ENCODE measurements at regions of chr6 and their contacts with region 1.

Region 1: GRCh38 chr6:30828027-30828960 is 56.0 kb upstream of the DDR1 start:
- DNase-seq: peak; percentile 86 to 94
- ATAC-seq: peak; percentile 89 to 93
- H3K4me3 ChIP-seq: peak overlapping the region in 2 of 4 donors; percentile 31 to 42
- H3K27ac ChIP-seq: peak overlapping the region; percentile 85 to 94 (median 92)
- H3K4me1 ChIP-seq: peaks cover 28 to 31% of the 10 kb centered on the region in 2 donors
- H3K27me3 ChIP-seq: no peaks in the 10 kb centered on the region
- CTCF ChIP-seq: peak; percentile 88 to 97 (median 93)
- POLR2A ChIP-seq: peak in 1 of 2 donors; percentile 52

Region 2: GRCh38 chr6:30717042-30717844 is 111.1 kb before region 1 on chr6 and contains the start of gene MDC1:
- in situ Hi-C with region 1: no loop called
- intact Hi-C with region 1: no loop called
- DNase-seq: peak; percentile 100
- ATAC-seq: peak; percentile 79 to 80
- H3K4me3 ChIP-seq: peak within 1 kb of the TSS; percentile 69 to 91 (median 86)
- H3K27ac ChIP-seq: peak within 1 kb of the TSS; percentile 94 to 99 (median 97)
- H3K4me1 ChIP-seq: peaks cover 27 to 30% of the 10 kb centered on the region in 2 donors
- H3K27me3 ChIP-seq: no peaks in the 10 kb centered on the region
- CTCF ChIP-seq: peak; percentile 41 to 57 (median 46)
- POLR2A ChIP-seq: peak; percentile 62 to 91
- total RNA-seq, gene MDC1: 3.6 to 8.9 (median 6.2) TPM

Region 3: GRCh38 chr6:30742316-30743098 is 85.8 kb before region 1 on chr6 and contains the start of gene FLOT1:
- in situ Hi-C with region 1: loop called in 2 of 4 experiments (anchors 5 to 10 kb)
- intact Hi-C with region 1: loop called (anchors 2 kb)
- DNase-seq: peak; percentile 93 to 98
- ATAC-seq: peak; percentile 79 to 84
- H3K4me3 ChIP-seq: peak within 1 kb of the TSS; percentile 63 to 83 (median 74)
- H3K27ac ChIP-seq: peak within 1 kb of the TSS; percentile 86 to 94 (median 86)
- H3K4me1 ChIP-seq: peaks cover 22 to 24% of the 10 kb centered on the region in 2 donors
- H3K27me3 ChIP-seq: no peaks in the 10 kb centered on the region
- CTCF ChIP-seq: peak in 1 of 5 experiments; percentile 8
- POLR2A ChIP-seq: peak; percentile 70 to 71
- total RNA-seq, gene FLOT1: 96.9 to 127 (median 117) TPM

Region 4: GRCh38 chr6:30877419-30878371 is 49.4 kb after region 1 on chr6:
- in situ Hi-C with region 1: loop called (anchors 5 to 10 kb)
- intact Hi-C with region 1: loop called (anchors 1 kb)
- DNase-seq: peak; percentile 74 to 89
- ATAC-seq: peak; percentile 86 to 88
- H3K4me3 ChIP-seq: peak overlapping the region; percentile 40 to 54 (median 41)
- H3K27ac ChIP-seq: peak overlapping the region; percentile 76 to 80 (median 79)
- H3K4me1 ChIP-seq: peaks cover 20 to 33% of the 10 kb centered on the region in 2 donors
- H3K27me3 ChIP-seq: no peaks in the 10 kb centered on the region
- CTCF ChIP-seq: peak; percentile 89 to 92 (median 91)
- POLR2A ChIP-seq: peak in 1 of 2 donors; percentile 11

Region 5: DNA sequence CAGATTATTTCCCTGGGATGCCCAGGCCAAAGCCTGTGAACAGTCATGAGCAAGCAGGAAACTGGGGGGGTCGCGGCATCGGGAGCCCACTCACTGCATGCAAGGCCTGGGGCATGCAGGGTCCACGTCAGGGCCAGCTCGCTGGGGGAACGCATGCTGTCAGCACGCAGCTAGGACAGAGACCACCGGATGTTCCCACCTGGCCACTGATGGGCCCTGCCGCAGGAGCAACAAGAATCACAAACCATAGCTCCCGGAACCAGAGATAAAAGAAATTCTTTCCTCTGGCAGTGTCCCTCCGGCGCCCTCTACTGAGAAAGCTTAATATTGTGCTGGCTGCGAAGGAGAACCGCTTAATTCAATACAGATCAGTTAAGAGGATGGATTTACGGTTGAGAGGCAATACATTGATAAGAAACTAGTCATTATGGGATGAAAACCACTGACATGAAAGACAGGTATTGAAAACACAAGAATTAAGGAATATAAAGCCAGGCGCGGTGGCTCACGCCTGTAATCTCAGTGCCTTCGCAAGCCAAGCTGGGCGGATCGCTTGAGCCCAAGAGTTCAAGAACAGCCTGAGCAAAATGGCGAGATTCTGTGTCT is 251.5 kb after region 1 on chr6:
- in situ Hi-C with region 1: loop called (anchors 5 to 10 kb)
- intact Hi-C with region 1: loop called (anchors 2 kb)
- DNase-seq: peak; percentile 44
- ATAC-seq: peak; percentile 65 to 75
- H3K4me3 ChIP-seq: peak overlapping the region in 1 of 4 donors; percentile 14
- H3K27ac ChIP-seq: no peak overlapping the region
- H3K4me1 ChIP-seq: peaks cover 3 to 7% of the 10 kb centered on the region in 2 donors
- H3K27me3 ChIP-seq: no peaks in the 10 kb centered on the region
- CTCF ChIP-seq: peak; percentile 55 to 86 (median 66)
- POLR2A ChIP-seq: no peak